CD4-positive, alpha-beta memory T cell (primary cell): ENCODE measurements at regions of chr1 and their contacts with region 1.

Region 1: GRCh38 chr1:59071289-59071688 is 225.6 kb upstream of the FGGY start:
- DNase-seq: peak in 1 of 5 donors; percentile 5
- H3K4me3 ChIP-seq: no peak overlapping the region
- H3K4me3 Mint-ChIP-seq: peak overlapping the region in 7 of 8 donors; percentile 47 to 76 (median 55)
- H3K27ac ChIP-seq: no peak overlapping the region
- H3K27ac Mint-ChIP-seq: peak overlapping the region; percentile 25 to 84 (median 64)
- H3K4me1 ChIP-seq: peaks cover 23% of the 10 kb centered on the region
- H3K4me1 Mint-ChIP-seq: peaks cover 16 to 30% (median 22%) of the 10 kb centered on the region in 4 donors
- H3K27me3 ChIP-seq: no peaks in the 10 kb centered on the region
- H3K27me3 Mint-ChIP-seq: no peaks in the 10 kb centered on the region

Region 2: DNA sequence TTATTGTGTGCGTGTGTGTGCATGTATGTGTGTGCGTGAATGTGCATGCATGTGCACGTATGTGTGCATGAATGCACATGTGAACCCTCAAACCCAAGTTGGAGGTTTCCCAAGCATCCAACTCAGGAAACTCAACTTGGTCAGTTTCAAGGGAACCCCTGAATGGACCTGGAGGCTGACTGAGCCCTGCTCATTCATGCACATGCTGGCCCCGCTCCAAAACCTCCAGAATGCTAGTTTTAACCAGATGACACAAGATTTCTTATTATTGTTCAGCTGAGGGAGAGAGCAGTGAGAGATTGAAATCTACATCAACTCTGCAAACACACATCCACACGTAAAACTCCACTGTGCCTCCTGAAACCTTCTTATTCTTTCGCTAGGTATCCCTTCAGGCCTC is 629.2 kb before region 1 on chr1:
- CTCF ChIA-PET with region 1: no interaction called
- POLR2A ChIA-PET with region 1: no interaction called
- intact Hi-C with region 1: no loop called
- DNase-seq: no peak
- H3K4me3 ChIP-seq: no peak overlapping the region
- H3K4me3 Mint-ChIP-seq: no peak overlapping the region
- H3K27ac ChIP-seq: no peak overlapping the region
- H3K27ac Mint-ChIP-seq: no peak overlapping the region
- H3K4me1 ChIP-seq: no peaks in the 10 kb centered on the region
- H3K4me1 Mint-ChIP-seq: no peaks in the 10 kb centered on the region
- H3K27me3 ChIP-seq: no peaks in the 10 kb centered on the region
- H3K27me3 Mint-ChIP-seq: peaks cover 0 to 1% of the 10 kb centered on the region in 2 donors

Region 3: GRCh38 chr1:59020151-59020997 is 50.9 kb before region 1 on chr1:
- CTCF ChIA-PET with region 1: no interaction called
- POLR2A ChIA-PET with region 1: interaction called, 3 read pairs
- intact Hi-C with region 1: loop called (anchors 5 kb)
- DNase-seq: peak; percentile 48 to 72 (median 52)
- H3K4me3 ChIP-seq: peak overlapping the region; percentile 39 to 63
- H3K4me3 Mint-ChIP-seq: peak overlapping the region; percentile 83 to 91 (median 86)
- H3K27ac ChIP-seq: peak overlapping the region; percentile 57
- H3K27ac Mint-ChIP-seq: peak overlapping the region; percentile 76 to 96 (median 95)
- H3K4me1 ChIP-seq: peaks cover 16% of the 10 kb centered on the region
- H3K4me1 Mint-ChIP-seq: peaks cover 13 to 31% (median 23%) of the 10 kb centered on the region in 4 donors
- H3K27me3 ChIP-seq: no peaks in the 10 kb centered on the region
- H3K27me3 Mint-ChIP-seq: no peaks in the 10 kb centered on the region